Activated CD4-positive, alpha-beta T cell treated with anti-CD3 and anti-CD28 coated beads, Interleukin-2, amount 10 ng/mL, durations not matched to agents 24 days and 14 days (primary cell): ENCODE measurements at regions of chr9 and their contacts with region 1.

Region 1: DNA sequence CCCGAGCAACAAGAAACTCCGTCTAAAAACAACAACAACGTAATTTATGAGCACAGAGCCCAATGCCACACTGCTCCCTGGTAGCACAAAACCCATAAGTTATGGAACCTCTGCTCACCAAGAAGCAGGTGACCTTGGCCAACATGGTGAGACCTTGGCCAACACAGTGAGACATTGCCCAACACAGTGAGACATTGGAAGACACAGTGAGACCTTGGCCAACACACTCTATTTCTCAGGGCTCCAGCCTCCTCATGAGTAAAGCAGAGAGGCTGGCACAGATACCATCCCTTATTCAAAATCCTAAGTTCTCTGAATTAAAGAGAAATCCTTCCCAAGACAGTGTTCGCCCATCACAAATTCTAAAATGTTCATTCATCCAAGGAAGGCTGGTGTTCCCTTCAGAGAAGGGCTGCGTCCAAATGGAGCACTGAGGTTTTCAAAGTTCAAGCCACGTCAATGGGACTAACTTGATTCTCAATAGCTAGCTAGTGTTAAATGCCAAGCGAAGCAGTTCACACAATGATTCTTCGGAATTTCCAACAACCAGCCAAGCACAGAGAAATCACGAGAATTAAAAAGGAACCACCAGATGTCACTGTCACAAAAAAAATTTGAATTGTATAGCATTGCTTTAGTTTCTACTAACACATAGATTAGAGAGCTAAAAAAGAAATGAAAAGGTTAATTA is 29.5 kb downstream of the TTC39B start:
- DNase-seq: no peak
- H3K4me3 Mint-ChIP-seq: no peak overlapping the region
- H3K27ac Mint-ChIP-seq: no peak overlapping the region
- H3K4me1 Mint-ChIP-seq: peaks cover 24% of the 10 kb centered on the region
- H3K27me3 Mint-ChIP-seq: no peaks in the 10 kb centered on the region

Region 2: GRCh38 chr9:15306757-15307534 is 29.4 kb after region 1 on chr9 and contains the start of gene TTC39B:
- intact Hi-C with region 1: loop called (anchors 2 kb)
- DNase-seq: peak; percentile 96
- H3K4me3 Mint-ChIP-seq: peak within 1 kb of the TSS; percentile 99
- H3K27ac Mint-ChIP-seq: peak within 1 kb of the TSS; percentile 97
- H3K4me1 Mint-ChIP-seq: peaks cover 51% of the 10 kb centered on the region
- H3K27me3 Mint-ChIP-seq: no peaks in the 10 kb centered on the region
- total RNA-seq, gene TTC39B: 20.3 and 22.2 TPM in 2 replicates

Region 3: GRCh38 chr9:15357050-15357653 is 79.6 kb after region 1 on chr9:
- intact Hi-C with region 1: loop called (anchors 5 kb)
- DNase-seq: peak; percentile 81
- H3K4me3 Mint-ChIP-seq: no peak overlapping the region
- H3K27ac Mint-ChIP-seq: no peak overlapping the region
- H3K4me1 Mint-ChIP-seq: peaks cover 10% of the 10 kb centered on the region
- H3K27me3 Mint-ChIP-seq: peaks cover 2% of the 10 kb centered on the region

Region 4: DNA sequence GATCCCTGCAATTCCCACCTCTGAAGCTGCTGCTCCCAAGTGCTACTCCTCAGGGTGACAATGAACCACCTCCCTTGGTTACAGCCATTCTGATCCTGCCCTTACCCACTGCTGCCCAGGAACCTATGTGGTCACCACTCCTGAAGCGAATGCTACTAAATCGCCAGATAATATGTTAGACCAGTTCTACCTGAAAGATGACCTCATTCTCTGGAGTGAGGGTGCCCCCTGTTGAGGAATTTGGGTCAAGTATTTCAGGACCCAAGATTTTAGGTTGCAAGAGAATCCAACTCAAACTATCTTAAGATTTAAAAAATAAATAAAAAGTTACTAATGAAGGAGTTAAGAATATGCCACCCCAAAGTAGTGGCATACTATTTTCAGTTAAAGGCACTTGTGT is 139.3 kb after region 1 on chr9:
- intact Hi-C with region 1: loop called (anchors 1 kb)
- DNase-seq: peak; percentile 83
- H3K4me3 Mint-ChIP-seq: no peak overlapping the region
- H3K27ac Mint-ChIP-seq: no peak overlapping the region
- H3K4me1 Mint-ChIP-seq: peaks cover 10% of the 10 kb centered on the region
- H3K27me3 Mint-ChIP-seq: peaks cover 11% of the 10 kb centered on the region

Region 5: DNA sequence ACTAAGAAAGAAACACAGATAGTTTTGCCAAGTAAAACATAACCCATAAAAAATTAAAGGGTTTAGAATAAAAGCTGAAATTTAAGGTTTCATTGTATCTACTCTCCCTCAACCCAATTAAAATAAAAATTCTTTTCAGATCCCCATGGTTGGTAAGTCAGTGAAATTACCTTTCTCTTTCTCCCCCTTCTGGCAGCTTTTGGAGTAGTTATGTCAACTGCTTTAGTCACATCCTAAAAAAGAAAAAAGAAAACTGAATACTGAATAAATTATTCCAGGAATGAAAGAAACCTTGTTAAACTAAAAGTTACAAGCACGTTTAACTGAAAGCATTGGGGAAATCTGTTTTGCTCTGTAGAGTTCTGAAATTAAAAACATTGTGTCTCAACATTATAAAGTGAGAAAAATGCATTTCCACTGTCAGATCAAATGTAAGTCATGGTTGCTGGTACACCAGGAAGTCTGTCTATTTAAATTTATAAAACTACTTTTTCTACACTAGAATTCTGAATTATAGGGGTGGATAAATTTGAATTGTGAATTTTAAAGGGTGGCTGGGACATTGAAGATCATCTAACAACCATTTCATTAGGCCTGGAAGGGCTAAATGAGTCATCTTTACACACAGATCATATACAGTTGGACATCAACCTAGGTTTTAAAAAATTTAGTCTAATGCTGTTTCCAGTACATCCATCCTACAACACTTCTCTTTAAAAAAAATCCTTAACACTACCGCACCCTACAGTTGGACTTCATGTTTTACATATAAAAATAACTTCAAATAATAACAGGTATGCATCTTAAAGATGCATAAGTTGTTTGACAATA is 208.5 kb after region 1 on chr9:
- intact Hi-C with region 1: loop called (anchors 5 kb)
- DNase-seq: no peak
- H3K4me3 Mint-ChIP-seq: no peak overlapping the region
- H3K27ac Mint-ChIP-seq: peak overlapping the region; percentile 38
- H3K4me1 Mint-ChIP-seq: peaks cover 22% of the 10 kb centered on the region
- H3K27me3 Mint-ChIP-seq: no peaks in the 10 kb centered on the region

Region 6: DNA sequence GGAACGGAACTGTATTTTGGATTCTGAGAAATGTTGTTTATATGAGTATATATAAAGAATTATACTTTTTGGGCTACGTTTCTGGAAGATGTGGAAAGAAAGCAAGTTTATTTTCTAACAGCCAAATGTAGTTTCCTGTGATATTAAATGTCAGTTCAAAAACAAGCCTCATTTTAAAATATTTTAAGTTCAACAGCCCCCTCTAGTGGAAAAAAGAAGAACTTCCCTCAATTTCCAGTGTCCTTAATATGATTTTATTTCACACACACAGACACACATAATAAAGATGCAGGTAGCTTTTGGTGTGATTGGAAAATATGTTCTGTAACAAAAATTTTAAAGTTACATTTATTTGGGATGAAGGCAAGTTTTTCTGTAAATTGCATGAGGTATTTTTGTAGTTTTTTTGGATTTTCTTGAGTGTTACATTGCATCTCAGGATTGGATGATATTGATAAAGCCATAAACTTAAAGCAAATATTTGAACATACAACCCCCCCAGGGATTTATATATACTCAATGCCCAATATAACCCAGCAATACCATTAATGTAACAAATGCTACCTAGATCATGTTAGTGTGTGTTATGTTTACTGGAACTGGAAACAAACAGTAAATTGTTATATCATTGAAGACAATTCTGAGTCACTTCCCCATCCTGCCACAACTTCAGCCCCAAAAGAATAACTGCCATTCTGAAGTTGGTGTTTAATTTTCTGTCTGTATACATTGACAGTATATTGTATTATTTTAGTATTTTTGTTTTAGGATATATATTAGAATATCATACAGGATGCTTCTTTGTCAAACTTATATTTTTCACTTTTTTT is 329.3 kb after region 1 on chr9:
- intact Hi-C with region 1: loop called (anchors 1 kb)
- DNase-seq: peak; percentile 78
- H3K4me3 Mint-ChIP-seq: no peak overlapping the region
- H3K27ac Mint-ChIP-seq: no peak overlapping the region
- H3K4me1 Mint-ChIP-seq: peaks cover 5% of the 10 kb centered on the region
- H3K27me3 Mint-ChIP-seq: no peaks in the 10 kb centered on the region